Cardiac septum (tissue), 1 donor: ENCODE measurements at regions of chr17 and their contacts with region 1.

Region 1: GRCh38 chr17:73719588-73720071 is 75.4 kb upstream of the SDK2 start:
- DNase-seq: peak; percentile 76

Region 2: DNA sequence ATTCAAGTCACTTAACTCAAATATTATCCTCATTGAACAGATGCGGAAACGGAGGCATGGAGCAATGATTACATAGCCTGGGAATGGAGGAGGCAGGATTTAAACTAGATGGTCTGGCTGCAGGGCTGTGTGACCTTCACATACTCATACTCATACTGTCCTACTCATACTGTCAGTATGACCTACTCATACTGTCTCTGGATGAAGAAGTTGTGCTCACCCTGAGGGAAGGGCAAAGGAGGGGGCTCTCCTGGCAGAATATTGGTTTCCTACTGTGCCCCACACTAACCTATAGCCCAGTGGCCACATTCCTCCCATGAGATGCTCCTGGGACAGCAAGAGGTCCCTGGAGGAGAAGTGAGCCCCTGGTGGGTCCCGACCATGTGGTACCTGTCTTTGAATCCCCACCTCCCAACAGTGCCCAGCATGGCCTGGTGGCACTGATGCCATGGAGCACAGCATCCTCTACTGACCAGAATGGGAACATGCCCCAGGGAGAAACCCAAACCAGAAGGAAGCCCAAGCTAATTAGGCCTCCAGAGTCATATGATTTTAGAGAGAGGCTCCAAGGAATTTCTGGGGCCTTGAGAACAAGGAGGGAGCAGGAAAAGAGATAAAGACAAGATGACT is 121.9 kb after region 1 on chr17:
- intact Hi-C with region 1: loop called (anchors 5 kb)
- DNase-seq: no peak